ENCODE measurements at regions of chr17 and their contacts with region 1.

Region 1: GRCh38 chr17:38853292-38854219 is at the start of gene RPL23:
- DNase-seq: peak; percentile 82 to 93 (median 90)
- H3K4me3 ChIP-seq: peak within 1 kb of the TSS; percentile 90
- H3K4me3 Mint-ChIP-seq: peak within 1 kb of the TSS; percentile 88 to 97 (median 92)
- H3K27ac ChIP-seq: peak within 1 kb of the TSS; percentile 94
- H3K27ac Mint-ChIP-seq: peak within 1 kb of the TSS; percentile 96 to 100 (median 99)
- H3K4me1 ChIP-seq: peaks cover 36% of the 10 kb centered on the region
- H3K4me1 Mint-ChIP-seq: peaks cover 41 to 46% (median 42%) of the 10 kb centered on the region in 3 donors
- H3K27me3 ChIP-seq: no peaks in the 10 kb centered on the region
- H3K27me3 Mint-ChIP-seq: no peaks in the 10 kb centered on the region
- total RNA-seq, gene RPL23: 1,857 to 1,911 TPM

Region 2: DNA sequence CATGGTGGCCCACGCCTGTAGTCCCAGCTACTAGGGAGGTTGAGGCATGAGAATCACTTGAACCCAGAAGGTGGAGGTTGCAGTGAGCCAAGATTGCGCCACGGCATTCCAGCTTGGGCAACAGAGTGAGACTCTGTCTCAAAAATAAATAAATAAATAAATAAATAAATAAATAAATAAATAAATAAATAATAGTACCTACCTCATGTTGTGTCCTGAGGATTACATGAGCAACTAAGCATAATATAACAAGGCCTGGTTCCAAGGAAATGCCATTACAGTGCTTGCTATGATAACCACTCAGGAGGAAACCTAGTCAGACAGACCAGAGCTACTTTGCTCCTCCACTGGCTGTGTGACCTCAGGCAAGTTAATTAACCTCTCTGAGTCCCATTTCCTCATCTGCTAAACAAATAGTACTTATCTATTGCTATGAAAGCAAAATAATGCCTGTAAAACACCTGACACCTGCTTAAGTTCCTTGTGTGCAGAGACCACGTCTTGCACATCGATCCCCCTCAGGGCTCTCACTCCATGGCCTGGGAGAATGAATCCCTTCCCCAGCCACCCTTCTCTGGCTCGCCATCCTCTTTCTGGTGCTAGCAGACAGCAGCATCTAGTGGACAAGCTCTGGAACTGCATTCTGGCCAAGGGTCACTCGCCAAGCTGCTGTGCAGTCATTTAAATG is 186.3 kb before region 1 on chr17:
- CTCF ChIA-PET with region 1: no interaction called
- POLR2A ChIA-PET with region 1: no interaction called
- DNase-seq: peak; percentile 39 to 66 (median 44)
- H3K4me3 ChIP-seq: no peak overlapping the region
- H3K4me3 Mint-ChIP-seq: no peak overlapping the region
- H3K27ac ChIP-seq: no peak overlapping the region
- H3K27ac Mint-ChIP-seq: peak overlapping the region in 1 of 8 donors; percentile 1
- H3K4me1 ChIP-seq: no peaks in the 10 kb centered on the region
- H3K4me1 Mint-ChIP-seq: peaks cover 0 to 5% (median 1%) of the 10 kb centered on the region in 3 donors
- H3K27me3 ChIP-seq: peaks cover 12% of the 10 kb centered on the region
- H3K27me3 Mint-ChIP-seq: peaks cover 41 to 65% of the 10 kb centered on the region in 2 donors

Region 3: GRCh38 chr17:38761612-38762011 is 91.9 kb before region 1 on chr17:
- CTCF ChIA-PET with region 1: no interaction called
- POLR2A ChIA-PET with region 1: no interaction called
- DNase-seq: no peak
- H3K4me3 ChIP-seq: no peak overlapping the region
- H3K4me3 Mint-ChIP-seq: no peak overlapping the region
- H3K27ac ChIP-seq: no peak overlapping the region
- H3K27ac Mint-ChIP-seq: peak overlapping the region in 6 of 8 donors; percentile 8 to 86 (median 74)
- H3K4me1 ChIP-seq: peaks cover 7% of the 10 kb centered on the region
- H3K4me1 Mint-ChIP-seq: peaks cover 11 to 14% (median 13%) of the 10 kb centered on the region in 3 donors
- H3K27me3 ChIP-seq: no peaks in the 10 kb centered on the region
- H3K27me3 Mint-ChIP-seq: no peaks in the 10 kb centered on the region

Region 4: GRCh38 chr17:38824899-38825761 is 28.4 kb before region 1 on chr17 and contains the start of gene CWC25:
- CTCF ChIA-PET with region 1: interaction called, 3 read pairs
- POLR2A ChIA-PET with region 1: interaction called, 29 read pairs
- DNase-seq: peak; percentile 87 to 98 (median 96)
- H3K4me3 ChIP-seq: peak within 1 kb of the TSS; percentile 89
- H3K4me3 Mint-ChIP-seq: peak within 1 kb of the TSS; percentile 85 to 100 (median 100)
- H3K27ac ChIP-seq: peak within 1 kb of the TSS; percentile 100
- H3K27ac Mint-ChIP-seq: peak within 1 kb of the TSS; percentile 100
- H3K4me1 ChIP-seq: peaks cover 17% of the 10 kb centered on the region
- H3K4me1 Mint-ChIP-seq: peaks cover 26 to 39% (median 37%) of the 10 kb centered on the region in 3 donors
- H3K27me3 ChIP-seq: no peaks in the 10 kb centered on the region
- H3K27me3 Mint-ChIP-seq: peaks cover 0 to 7% of the 10 kb centered on the region in 2 donors
- total RNA-seq, gene CWC25: 31.3 to 31.7 TPM